ENCODE measurements at regions of chr12 and their contacts with region 1.

Region 1: GRCh38 chr12:38886064-38886463 is 19.3 kb downstream of the CPNE8 start:
- DNase-seq: peak in 1 of 2 experiments; percentile 8
- H3K4me3 ChIP-seq: no peak overlapping the region
- H3K27ac ChIP-seq: no peak overlapping the region
- H3K4me1 ChIP-seq: no peaks in the 10 kb centered on the region
- H3K27me3 ChIP-seq: no peaks in the 10 kb centered on the region
- CTCF ChIP-seq: no peak

Region 2: GRCh38 chr12:39912211-39912978 is 1026.3 kb after region 1 on chr12:
- CTCF ChIA-PET with region 1: no interaction called
- POLR2A ChIA-PET with region 1: interaction called, 12 read pairs
- intact Hi-C with region 1: no loop called
- DNase-seq: peak in 1 of 2 experiments; percentile 3
- H3K4me3 ChIP-seq: no peak overlapping the region
- H3K27ac ChIP-seq: no peak overlapping the region
- H3K4me1 ChIP-seq: no peaks in the 10 kb centered on the region
- H3K27me3 ChIP-seq: no peaks in the 10 kb centered on the region
- CTCF ChIP-seq: no peak